AG04450 (cell line): ENCODE measurements at regions of chr1 and their contacts with region 1.

Region 1: GRCh38 chr1:196372896-196373536 is 235.2 kb downstream of the KCNT2 start:
- DNase-seq: no peak
- H3K4me3 ChIP-seq: no peak overlapping the region
- H3K27ac ChIP-seq: no peak overlapping the region
- H3K27me3 ChIP-seq: no peaks in the 10 kb centered on the region
- CTCF ChIP-seq: peak; percentile 55

Region 2: DNA sequence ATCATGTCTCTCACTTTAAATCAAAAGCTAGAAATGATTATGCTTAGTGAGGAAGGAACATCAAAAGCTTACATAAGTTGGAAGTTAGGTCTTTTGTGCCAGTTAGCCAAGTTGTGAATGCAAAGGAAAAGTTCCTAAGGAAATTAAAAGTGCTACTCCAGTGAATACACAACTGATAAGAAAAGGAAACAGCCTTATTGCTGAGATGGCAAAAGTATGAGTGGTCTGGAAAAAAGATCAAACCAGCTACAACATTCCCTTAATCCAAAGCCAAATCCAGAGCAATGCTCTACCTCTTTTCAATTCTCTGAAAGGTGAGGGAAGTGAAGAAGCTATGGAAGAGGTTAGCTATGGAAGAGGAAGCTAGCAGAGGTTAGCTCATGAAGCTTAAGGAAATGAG is 143.5 kb before region 1 on chr1:
- CTCF ChIA-PET with region 1: no interaction called
- POLR2A ChIA-PET with region 1: no interaction called
- DNase-seq: no peak
- H3K4me3 ChIP-seq: no peak overlapping the region
- H3K27ac ChIP-seq: no peak overlapping the region
- H3K27me3 ChIP-seq: no peaks in the 10 kb centered on the region
- CTCF ChIP-seq: no peak

Region 3: GRCh38 chr1:196295766-196296165 is 77.2 kb before region 1 on chr1:
- CTCF ChIA-PET with region 1: no interaction called
- POLR2A ChIA-PET with region 1: no interaction called
- DNase-seq: no peak
- H3K4me3 ChIP-seq: no peak overlapping the region
- H3K27ac ChIP-seq: no peak overlapping the region
- H3K27me3 ChIP-seq: no peaks in the 10 kb centered on the region
- CTCF ChIP-seq: no peak

Region 4: GRCh38 chr1:196385109-196385508 is 12.1 kb after region 1 on chr1:
- CTCF ChIA-PET with region 1: interaction called, 13 read pairs
- POLR2A ChIA-PET with region 1: no interaction called
- DNase-seq: no peak
- H3K4me3 ChIP-seq: no peak overlapping the region
- H3K27ac ChIP-seq: no peak overlapping the region
- H3K27me3 ChIP-seq: no peaks in the 10 kb centered on the region
- CTCF ChIP-seq: no peak

Region 5: DNA sequence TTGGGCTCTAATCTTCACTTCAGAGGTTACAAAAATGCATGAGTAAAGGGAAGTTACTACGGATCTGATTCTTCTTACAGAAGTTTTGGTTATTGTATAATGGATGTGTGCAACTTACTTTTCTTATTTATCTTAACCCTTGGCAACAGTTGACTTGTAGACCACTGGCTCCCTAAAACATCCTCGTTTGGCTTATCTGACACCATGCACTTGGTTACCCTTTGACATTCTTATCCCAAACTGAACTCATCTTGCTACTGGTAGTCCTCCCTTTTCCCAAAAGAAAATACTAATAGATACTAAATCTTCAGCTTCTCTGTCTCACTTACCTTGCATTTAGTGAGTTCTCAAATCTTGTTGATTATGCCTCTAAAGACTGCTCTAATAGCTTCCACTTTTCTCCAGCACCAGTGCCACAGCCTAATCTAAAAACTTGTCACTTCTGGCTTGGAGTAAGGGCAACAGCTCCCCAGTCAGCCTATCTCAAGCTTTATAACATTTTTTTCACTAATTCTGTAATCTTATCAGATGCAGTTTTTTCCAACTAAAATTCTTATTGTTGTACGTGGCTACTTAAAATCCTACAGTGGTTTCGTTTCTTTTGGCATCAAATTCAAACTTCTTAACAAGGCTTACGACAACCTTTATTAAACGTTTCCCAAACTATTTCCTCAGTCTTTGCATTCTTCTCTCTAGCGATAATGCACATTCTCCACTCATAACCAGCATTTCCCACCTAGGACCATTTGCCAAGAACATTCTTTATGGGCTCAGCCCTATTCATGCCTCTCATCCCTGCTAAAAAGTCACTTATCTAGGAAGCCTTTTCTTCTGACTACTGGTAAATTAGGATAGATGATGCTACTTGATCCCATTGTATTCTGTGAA is 31.0 kb after region 1 on chr1:
- CTCF ChIA-PET with region 1: no interaction called
- POLR2A ChIA-PET with region 1: no interaction called
- DNase-seq: no peak
- H3K4me3 ChIP-seq: no peak overlapping the region
- H3K27ac ChIP-seq: no peak overlapping the region
- H3K27me3 ChIP-seq: no peaks in the 10 kb centered on the region
- CTCF ChIP-seq: no peak